Activated CD4-positive, alpha-beta memory T cell treated with anti-CD3 and anti-CD28 coated beads for 36 hours (primary cell): ENCODE measurements at regions of chr11 and their contacts with region 1.

Region 1: DNA sequence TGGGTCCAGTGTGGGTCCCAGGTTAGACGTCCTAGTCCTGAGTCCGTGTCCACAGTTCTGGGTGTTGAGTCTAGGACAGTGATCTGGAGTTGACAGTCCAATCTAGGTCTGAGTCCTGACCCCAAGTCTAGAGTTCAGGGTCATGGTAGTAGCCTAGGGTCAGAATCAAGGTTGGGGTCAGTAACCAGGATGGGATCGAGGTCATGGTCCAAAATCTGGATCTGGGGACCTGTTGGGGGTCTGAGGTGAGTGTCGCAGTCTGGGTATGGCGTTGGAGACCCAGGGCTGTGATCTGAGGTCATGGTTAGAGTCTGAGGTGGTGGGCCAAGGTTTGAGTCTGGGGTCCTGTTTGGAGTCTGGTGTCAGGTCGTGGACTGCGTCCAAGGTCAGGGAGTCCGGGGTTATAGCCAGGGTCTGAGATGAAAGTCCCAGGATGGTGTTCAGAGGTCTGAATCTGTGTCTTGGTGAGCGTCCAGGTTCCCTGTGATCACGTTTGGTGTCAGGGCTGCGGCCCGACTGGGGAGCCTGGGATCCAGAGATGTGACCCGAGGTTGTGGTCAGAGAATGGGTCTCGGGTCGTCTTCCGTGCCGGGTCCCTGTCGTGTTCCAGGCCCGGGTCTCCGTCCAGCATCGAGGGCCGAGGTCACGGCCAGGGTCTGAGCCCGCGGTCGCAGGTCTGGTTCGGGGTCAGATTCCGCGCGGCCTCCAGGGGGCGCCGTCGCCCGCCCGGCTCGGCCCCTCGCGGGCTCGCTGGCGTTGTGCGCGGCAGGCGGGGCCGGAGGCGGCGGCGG is 445 bp upstream of the GRK2 start:
- DNase-seq: peak; percentile 84
- H3K4me3 Mint-ChIP-seq: peak overlapping the region; percentile 63
- H3K27ac Mint-ChIP-seq: peak overlapping the region; percentile 80
- H3K4me1 Mint-ChIP-seq: peaks cover 72% of the 10 kb centered on the region
- H3K27me3 Mint-ChIP-seq: no peaks in the 10 kb centered on the region

Region 2: GRCh38 chr11:67160874-67161783 is 104.7 kb before region 1 on chr11:
- CTCF ChIA-PET with region 1: no interaction called
- POLR2A ChIA-PET with region 1: no interaction called
- intact Hi-C with region 1: no loop called
- DNase-seq: no peak
- H3K4me3 Mint-ChIP-seq: no peak overlapping the region
- H3K27ac Mint-ChIP-seq: peak overlapping the region; percentile 57
- H3K4me1 Mint-ChIP-seq: peaks cover 47% of the 10 kb centered on the region
- H3K27me3 Mint-ChIP-seq: no peaks in the 10 kb centered on the region

Region 3: DNA sequence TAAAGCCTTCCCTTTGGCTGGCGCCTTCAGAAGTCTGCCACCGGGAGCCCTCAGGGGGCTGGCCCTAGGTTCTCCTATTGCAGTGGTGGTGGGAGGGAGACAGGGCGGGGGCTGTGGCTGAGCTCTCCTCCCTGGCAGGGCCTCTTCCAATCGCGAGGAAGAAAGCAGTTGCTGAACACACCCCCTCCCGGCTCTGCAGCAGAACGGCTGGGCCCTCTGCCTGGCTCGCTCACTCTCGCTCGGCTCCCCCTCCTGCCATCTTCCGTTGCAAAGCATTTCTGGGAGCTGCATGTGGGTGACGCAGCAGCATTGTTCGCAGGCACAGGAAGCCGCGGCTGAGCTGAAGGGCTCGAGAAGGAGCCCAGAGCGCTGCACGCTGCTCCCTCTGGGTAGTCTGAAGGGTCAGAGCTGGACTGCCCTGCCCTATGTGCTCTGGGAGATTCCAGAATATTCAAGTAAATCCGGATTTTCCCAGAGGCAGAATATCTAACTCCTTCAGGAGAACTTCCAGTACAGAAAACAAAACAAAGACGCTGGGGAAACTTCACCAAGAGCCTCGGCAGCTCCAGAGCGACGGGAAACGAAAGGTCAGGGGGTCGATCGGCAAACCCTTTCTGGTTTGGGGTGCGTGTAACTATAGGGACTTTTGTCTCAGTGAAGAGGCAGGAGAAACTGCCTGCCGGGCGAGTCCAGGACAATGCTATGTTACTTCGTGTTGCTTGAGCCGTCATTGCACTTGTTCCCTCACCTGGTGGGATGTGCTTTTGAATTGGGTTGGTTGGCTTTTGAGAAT is 25.8 kb before region 1 on chr11:
- CTCF ChIA-PET with region 1: interaction called, 24 read pairs
- POLR2A ChIA-PET with region 1: interaction called, 46 read pairs
- intact Hi-C with region 1: loop called (anchors 1 kb)
- DNase-seq: peak; percentile 99
- H3K4me3 Mint-ChIP-seq: peak overlapping the region; percentile 97
- H3K27ac Mint-ChIP-seq: peak overlapping the region; percentile 100
- H3K4me1 Mint-ChIP-seq: peaks cover 43% of the 10 kb centered on the region
- H3K27me3 Mint-ChIP-seq: no peaks in the 10 kb centered on the region

Region 4: DNA sequence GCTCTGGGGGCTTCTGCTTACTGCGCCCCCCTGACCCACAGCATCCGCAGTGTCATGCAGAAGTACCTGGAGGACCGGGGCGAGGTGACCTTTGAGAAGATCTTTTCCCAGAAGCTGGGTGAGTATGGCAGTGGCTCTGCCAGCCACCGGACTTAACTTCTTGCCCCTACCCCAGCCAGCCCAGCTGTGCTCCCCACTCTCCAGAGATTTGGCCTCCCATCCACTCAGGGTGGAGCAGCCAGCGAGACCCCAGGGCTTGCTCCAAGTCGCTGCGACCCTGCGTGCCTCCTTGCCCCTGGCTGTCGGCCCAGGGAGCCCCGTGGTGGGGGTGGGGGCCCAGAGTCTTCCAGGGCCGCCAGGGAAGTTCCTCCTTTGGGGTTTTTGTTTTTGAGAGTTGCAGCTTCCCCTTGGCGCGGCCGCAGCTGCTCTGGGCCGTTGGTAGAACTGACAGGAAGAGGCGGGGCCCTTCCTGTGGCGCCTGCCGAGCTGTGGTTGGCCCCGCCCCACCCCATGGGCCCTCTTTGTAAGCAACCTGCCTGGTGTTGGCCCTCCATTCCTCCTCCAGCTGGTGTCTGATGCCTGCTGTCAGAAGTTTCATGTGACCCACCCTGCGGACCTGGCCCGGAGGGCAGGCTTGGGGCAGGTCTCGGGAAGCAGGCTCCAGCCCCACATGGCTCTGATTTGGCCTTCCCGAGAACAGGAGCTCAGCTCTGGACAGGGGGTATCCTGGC is 11.6 kb after region 1 on chr11:
- CTCF ChIA-PET with region 1: interaction called, 19 read pairs
- POLR2A ChIA-PET with region 1: interaction called, 6 read pairs
- intact Hi-C with region 1: loop called (anchors 1 kb)
- DNase-seq: peak; percentile 94
- H3K4me3 Mint-ChIP-seq: peak overlapping the region; percentile 69
- H3K27ac Mint-ChIP-seq: peak overlapping the region; percentile 97
- H3K4me1 Mint-ChIP-seq: peaks cover 70% of the 10 kb centered on the region
- H3K27me3 Mint-ChIP-seq: no peaks in the 10 kb centered on the region

Region 5: GRCh38 chr11:67303132-67303834 is 37.5 kb after region 1 on chr11 and contains the start of gene SSH3:
- CTCF ChIA-PET with region 1: interaction called, 15 read pairs
- POLR2A ChIA-PET with region 1: interaction called, 5 read pairs
- intact Hi-C with region 1: no loop called
- DNase-seq: peak; percentile 62
- H3K4me3 Mint-ChIP-seq: peak within 1 kb of the TSS; percentile 70
- H3K27ac Mint-ChIP-seq: no peak within 1 kb of the TSS
- H3K4me1 Mint-ChIP-seq: peaks cover 13% of the 10 kb centered on the region
- H3K27me3 Mint-ChIP-seq: no peaks in the 10 kb centered on the region
- total RNA-seq, gene SSH3: 14.9 to 19.4 TPM

Region 6: DNA sequence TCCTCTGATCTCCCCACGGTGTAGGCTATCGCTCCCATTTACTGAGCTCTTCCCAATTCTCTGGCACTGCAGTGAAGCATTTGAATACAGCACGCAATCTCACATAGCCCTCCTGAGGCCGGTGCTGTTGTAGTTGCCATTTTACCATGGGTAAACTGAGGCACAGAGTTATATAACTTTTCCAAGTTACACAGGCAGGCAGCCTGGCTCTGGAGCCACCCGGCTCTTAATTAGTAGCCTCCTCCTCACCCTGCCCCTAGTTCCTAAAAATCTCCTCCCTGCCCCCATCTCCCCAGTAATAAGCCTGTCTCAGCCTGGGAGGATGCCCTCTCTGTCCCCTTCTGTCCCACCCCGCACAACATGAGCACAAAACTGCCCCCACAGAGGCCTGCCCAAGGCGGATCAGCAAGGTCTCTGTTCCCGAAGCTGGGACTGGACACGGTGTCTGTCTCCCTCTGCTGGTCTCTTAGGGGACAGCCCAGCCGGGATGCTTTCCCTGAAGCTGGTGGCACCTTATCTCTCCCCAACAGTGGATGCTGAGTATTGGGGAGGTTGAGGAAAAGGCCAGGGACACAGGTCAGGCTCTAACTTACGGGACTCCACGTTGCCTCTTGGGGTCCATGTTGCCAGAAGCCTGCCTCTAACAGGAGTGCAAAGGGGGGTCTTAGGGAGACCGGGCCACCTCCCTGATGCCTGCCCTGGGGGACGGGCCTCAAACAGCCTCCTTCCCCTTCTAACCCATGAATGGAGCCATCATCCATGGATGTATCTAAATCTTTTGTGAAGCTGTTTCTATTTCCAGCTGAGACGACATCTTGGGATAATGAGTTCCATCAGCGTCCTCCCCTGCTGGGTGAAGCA is 116.7 kb after region 1 on chr11:
- CTCF ChIA-PET with region 1: interaction called, 21 read pairs
- POLR2A ChIA-PET with region 1: no interaction called
- intact Hi-C with region 1: loop called (anchors 5 kb)
- DNase-seq: peak; percentile 90
- H3K4me3 Mint-ChIP-seq: no peak overlapping the region
- H3K27ac Mint-ChIP-seq: no peak overlapping the region
- H3K4me1 Mint-ChIP-seq: peaks cover 6% of the 10 kb centered on the region
- H3K27me3 Mint-ChIP-seq: no peaks in the 10 kb centered on the region

Region 7: DNA sequence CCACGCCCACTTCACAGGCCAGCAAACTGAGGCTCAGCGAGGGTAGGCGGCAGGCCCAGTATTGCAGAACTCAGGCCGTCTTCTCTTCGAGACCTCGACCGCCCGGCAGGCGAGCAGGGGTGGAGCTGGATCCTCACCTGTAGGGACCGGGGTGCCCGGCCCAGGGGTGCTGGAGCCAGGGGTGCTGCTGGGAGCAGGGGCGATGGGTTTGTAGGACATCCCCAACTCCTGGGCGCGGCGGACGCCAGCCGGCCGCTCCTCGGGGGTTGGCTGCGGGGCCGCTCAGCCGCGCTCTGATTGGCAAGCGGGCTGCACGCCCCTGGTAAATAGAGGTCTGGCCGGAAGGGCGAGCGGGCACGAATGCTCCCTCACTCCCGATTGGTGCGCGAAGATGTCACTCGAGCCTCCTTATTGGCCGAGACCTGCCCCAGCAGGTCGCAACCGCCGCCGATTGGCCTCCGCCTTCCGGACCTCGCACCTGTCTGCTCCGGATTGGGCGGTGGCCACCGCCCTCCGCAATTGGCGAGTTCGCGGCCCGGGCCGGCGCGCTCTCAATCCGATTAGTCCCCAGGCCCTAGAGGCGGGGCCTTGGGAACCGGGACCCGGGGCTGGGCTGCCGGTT is 242.1 kb after region 1 on chr11 and contains the start of gene CDK2AP2:
- CTCF ChIA-PET with region 1: no interaction called
- POLR2A ChIA-PET with region 1: no interaction called
- intact Hi-C with region 1: loop called (anchors 5 kb)
- DNase-seq: peak; percentile 99
- H3K4me3 Mint-ChIP-seq: peak within 1 kb of the TSS; percentile 90
- H3K27ac Mint-ChIP-seq: peak within 1 kb of the TSS; percentile 98
- H3K4me1 Mint-ChIP-seq: peaks cover 30% of the 10 kb centered on the region
- H3K27me3 Mint-ChIP-seq: no peaks in the 10 kb centered on the region
- total RNA-seq, gene CDK2AP2: 82.7 to 84.7 TPM